Mammary epithelial cell (primary cell): ENCODE measurements at regions of chr17 and their contacts with region 1.

Region 1: GRCh38 chr17:7296189-7296902 is 1.9 kb upstream of the YBX2 start:
- DNase-seq: peak; percentile 69
- H3K4me3 ChIP-seq: no peak overlapping the region
- H3K27ac ChIP-seq: no peak overlapping the region
- H3K4me1 ChIP-seq: peaks cover 5% of the 10 kb centered on the region
- H3K27me3 ChIP-seq: no peaks in the 10 kb centered on the region
- CTCF ChIP-seq: peak; percentile 59 to 93

Region 2: DNA sequence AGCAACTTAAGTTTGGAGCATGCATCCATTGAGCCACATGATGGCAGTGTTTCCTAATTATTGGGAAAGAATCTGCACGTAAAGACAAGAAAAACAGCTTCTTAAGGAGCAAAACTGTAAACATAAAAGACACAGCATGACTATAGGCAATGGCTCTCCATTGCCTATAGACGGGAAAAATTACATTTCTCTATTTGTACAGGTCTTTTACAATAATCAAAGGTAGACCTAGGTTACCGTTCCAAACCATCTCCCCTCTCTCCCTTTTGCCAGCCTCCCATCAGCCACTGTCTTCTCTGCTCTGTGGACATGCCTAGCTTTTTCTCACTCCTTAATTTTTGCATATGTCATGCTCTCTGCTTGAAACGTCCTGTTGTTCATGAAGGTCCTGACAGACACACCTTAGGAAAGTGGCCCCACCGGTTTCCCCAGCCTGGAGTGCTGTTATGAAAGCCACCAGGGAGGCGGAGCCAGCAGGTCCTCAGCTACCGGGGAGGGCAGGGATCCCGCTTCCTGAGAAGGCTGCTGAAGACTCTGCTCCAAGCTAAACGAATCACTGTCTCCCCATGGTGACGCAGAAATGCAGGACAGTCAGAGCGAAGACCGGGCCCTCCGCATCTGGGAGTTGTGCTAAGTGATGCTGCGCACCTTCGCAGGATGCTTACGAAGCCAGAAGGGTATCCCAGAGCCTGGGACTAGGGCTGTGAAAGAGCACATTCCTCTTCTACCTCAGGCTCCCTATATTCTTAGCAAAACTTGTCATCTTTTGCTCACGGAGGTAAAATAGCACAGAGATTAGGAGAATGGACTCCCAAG is 250.2 kb before region 1 on chr17:
- CTCF ChIA-PET with region 1: no interaction called
- dilution Hi-C with region 1: no loop called
- in situ Hi-C with region 1: loop called in 1 of 2 experiments (anchors 10 kb)
- intact Hi-C with region 1: loop called (anchors 1 kb)
- DNase-seq: peak; percentile 84
- H3K4me3 ChIP-seq: peak overlapping the region; percentile 20 to 26 (median 22)
- H3K27ac ChIP-seq: peak overlapping the region; percentile 73
- H3K4me1 ChIP-seq: peaks cover 31% of the 10 kb centered on the region
- H3K27me3 ChIP-seq: peaks cover 9% of the 10 kb centered on the region
- CTCF ChIP-seq: peak; percentile 79 to 88

Region 3: GRCh38 chr17:7056386-7056785 is 240.0 kb before region 1 on chr17:
- CTCF ChIA-PET with region 1: no interaction called
- dilution Hi-C with region 1: no loop called
- in situ Hi-C with region 1: no loop called
- intact Hi-C with region 1: loop called (anchors 1 kb)
- DNase-seq: peak; percentile 86
- H3K4me3 ChIP-seq: no peak overlapping the region
- H3K27ac ChIP-seq: no peak overlapping the region
- H3K4me1 ChIP-seq: peaks cover 23% of the 10 kb centered on the region
- H3K27me3 ChIP-seq: no peaks in the 10 kb centered on the region
- CTCF ChIP-seq: no peak

Region 4: GRCh38 chr17:7219812-7220581 is 76.3 kb before region 1 on chr17 and contains the starts of genes ACADVL and DLG4:
- CTCF ChIA-PET with region 1: interaction called, 5 read pairs
- dilution Hi-C with region 1: no loop called
- in situ Hi-C with region 1: no loop called
- intact Hi-C with region 1: loop called (anchors 1 kb)
- DNase-seq: peak; percentile 96
- H3K4me3 ChIP-seq: peak within 1 kb of the TSS; percentile 60 to 84 (median 64)
- H3K27ac ChIP-seq: peak within 1 kb of the TSS; percentile 84
- H3K4me1 ChIP-seq: peaks cover 22% of the 10 kb centered on the region
- H3K27me3 ChIP-seq: no peaks in the 10 kb centered on the region
- CTCF ChIP-seq: no peak
- total RNA-seq, gene ACADVL: 385 to 448 TPM
- total RNA-seq, gene DLG4: 1.5 to 10.8 TPM

Region 5: DNA sequence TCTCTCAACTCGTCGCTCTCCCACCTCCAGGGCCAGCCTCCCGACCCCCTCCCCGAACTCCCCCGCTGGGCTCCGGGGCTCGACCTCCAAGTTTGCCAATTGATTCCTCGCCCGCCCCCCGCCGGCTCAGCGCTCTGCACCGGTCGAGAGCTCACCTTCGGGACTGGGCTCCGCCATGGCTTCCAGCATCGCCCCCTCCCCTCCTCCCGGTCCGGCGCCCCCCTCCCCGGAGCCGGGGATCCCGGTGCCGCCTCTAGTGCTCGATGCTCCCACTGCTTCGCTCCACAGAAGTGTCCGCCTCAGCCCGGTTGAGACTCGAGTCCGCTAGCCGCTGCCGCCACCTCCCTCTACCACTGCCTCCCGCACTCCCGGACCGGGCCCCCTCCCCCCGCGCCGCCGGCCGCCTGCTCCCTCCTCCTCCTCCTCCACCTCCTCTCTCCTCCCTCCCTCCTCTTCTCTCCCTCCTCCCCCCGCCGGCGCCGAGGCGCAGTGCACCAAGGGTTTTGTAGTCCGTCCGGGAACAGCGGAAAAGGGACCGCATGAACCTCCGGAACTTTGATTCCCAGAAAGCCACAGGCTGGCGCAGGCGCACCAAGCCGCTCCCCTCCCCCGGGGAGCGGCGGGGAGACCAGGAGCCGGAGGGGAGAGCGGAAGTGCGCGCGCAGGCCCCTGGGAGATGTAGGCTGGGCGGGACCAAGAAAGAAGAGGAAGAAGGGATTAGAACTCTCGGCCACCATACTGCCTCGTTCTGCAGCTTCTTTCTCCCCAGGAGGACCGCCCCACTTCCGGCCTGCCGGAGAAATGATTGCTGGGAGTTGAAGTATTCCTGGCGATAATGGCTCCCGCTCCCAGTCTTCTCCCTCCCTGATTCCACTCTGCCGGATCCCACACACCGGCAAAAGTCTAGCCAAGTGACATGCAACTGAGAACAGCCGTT is 57.0 kb before region 1 on chr17 and contains the start of gene PHF23:
- CTCF ChIA-PET with region 1: no interaction called
- dilution Hi-C with region 1: no loop called
- in situ Hi-C with region 1: no loop called
- intact Hi-C with region 1: loop called (anchors 1 kb)
- DNase-seq: peak; percentile 100
- H3K4me3 ChIP-seq: peak within 1 kb of the TSS; percentile 84 to 92 (median 90)
- H3K27ac ChIP-seq: peak within 1 kb of the TSS; percentile 79
- H3K4me1 ChIP-seq: peaks cover 45% of the 10 kb centered on the region
- H3K27me3 ChIP-seq: no peaks in the 10 kb centered on the region
- CTCF ChIP-seq: peak in 1 of 2 donors; percentile 7
- total RNA-seq, gene PHF23: 36.7 to 53.6 TPM

Region 6: GRCh38 chr17:7280519-7281429 is 15.6 kb before region 1 on chr17:
- CTCF ChIA-PET with region 1: interaction called, 11 read pairs
- dilution Hi-C with region 1: no loop called
- in situ Hi-C with region 1: no loop called
- intact Hi-C with region 1: loop called (anchors 1 kb)
- DNase-seq: peak; percentile 78
- H3K4me3 ChIP-seq: peak overlapping the region; percentile 47 to 49 (median 48)
- H3K27ac ChIP-seq: peak overlapping the region; percentile 24
- H3K4me1 ChIP-seq: peaks cover 22% of the 10 kb centered on the region
- H3K27me3 ChIP-seq: no peaks in the 10 kb centered on the region
- CTCF ChIP-seq: peak; percentile 95 to 97

Region 7: DNA sequence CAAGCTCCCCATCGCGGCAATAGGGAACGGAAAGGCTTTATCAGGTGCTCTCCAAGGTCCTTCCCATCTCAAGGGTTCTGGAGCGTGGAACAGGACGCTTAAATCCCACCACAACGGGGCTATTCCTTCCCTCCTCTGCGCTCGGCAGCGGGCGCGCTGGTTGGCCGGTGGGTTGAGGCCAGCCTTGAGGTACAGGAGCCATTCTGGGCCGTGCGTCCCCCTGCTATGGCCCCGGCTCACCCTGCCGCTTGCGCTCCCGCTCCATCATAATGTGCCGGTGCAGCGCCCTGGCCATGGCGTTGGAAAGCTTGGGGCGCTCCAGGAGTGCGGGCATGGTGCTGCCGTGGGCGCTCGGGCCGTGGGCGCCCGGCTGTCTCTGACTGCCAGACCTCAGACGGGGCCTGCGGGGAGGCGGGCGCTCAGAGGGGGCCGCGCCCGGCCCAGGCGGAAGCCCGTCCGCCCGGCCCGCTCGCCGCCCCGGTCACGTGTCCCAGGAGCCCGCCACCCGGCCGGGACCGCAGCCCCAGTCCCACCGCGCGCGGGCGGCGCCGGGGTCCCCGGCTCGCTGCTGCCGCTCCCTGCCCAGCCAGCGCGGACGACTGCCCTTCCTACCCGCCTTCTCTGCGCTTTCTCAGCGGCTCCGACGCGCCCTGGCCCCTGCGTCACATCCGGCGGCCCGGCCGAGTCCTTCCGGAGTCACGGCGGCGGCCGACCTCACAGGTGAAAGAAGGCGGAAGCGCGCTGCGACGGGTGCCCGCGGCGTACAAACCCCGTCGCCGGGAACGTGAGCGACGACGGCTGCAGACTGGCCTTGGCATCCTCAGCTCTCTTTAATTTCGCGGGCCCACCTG is 18.6 kb after region 1 on chr17 and contains the start of gene GPS2:
- CTCF ChIA-PET with region 1: interaction called, 23 read pairs
- dilution Hi-C with region 1: no loop called
- in situ Hi-C with region 1: no loop called
- intact Hi-C with region 1: no loop called
- DNase-seq: peak; percentile 87
- H3K4me3 ChIP-seq: peak within 1 kb of the TSS; percentile 74 to 87 (median 79)
- H3K27ac ChIP-seq: peak within 1 kb of the TSS; percentile 36
- H3K4me1 ChIP-seq: peaks cover 35% of the 10 kb centered on the region
- H3K27me3 ChIP-seq: no peaks in the 10 kb centered on the region
- CTCF ChIP-seq: no peak
- total RNA-seq, gene GPS2: 29.7 to 40.5 TPM